Left colon (tissue), 2 donors: ENCODE measurements at regions of chr1 and their contacts with region 1.

Region 1: GRCh38 chr1:156445789-156446263 is 54.7 kb downstream of the MEF2D start:
- DNase-seq: peak; percentile 61 to 82
- ATAC-seq: peak; percentile 96

Region 2: DNA sequence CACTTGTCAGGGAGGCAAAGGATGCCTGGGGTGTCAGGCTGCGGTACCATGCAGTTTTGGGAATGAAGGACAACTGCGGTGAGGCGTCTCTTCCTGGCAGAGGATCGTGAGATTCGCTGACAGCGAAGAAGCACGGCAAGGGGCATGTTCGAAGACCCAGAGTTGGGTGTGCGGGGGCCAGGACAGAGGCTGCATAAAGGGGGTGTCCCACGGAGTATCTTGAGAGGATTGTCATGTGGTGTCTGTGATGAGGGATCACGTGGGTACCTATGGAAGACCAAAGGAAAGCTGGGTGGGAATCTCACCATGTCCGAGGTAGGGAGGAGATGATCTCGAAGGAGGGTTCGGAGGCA is 251.6 kb before region 1 on chr1:
- intact Hi-C with region 1: no loop called
- DNase-seq: no peak
- ATAC-seq: no peak

Region 3: DNA sequence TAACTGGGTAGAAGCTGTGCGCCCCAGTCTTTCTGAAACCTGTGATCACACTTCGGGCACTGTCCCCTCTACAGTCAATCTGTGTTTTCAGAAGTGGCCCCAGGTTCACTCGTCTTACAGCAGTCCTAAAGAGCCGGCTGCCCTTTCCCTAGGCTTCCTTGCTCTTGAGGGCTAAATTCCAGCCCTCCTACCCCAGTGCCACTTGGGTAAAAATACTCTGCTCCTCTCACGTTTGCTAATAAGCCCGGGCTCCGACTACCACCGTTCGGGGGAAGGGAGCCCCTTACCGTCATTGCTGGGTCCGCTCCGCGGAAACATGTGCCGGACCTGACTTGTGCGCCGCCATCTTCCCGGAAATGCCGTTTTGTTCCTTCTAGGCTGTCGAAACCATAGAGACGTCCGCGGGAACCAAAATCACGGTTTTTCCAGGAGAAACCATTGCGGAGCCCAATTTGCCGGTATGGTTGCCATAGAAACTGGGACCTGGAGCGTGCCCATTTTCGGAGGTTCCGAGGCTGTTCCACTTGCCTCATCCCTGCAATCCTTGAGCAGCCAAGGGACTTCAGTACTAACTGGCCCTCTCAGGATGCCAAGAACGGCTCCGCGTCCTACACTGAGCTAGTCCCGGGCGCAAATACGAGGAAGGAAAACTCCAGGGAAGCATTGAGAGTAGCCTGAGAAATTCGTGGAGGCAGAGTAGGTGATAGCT is 155.4 kb after region 1 on chr1 and contains the start of gene GPATCH4:
- intact Hi-C with region 1: loop called in 1 of 2 experiments (anchors 5 kb)
- DNase-seq: peak; percentile 71 to 82
- ATAC-seq: peak; percentile 87
- total RNA-seq, gene GPATCH4: 13.8 to 20.1 TPM